ENCODE measurements at regions of chr10 and their contacts with region 1.

Region 1: GRCh38 chr10:61284222-61284890 is 168.8 kb downstream of the TMEM26 start:
- DNase-seq: peak; percentile 13 to 52
- H3K4me3 ChIP-seq: no peak overlapping the region
- H3K4me1 ChIP-seq: no peaks in the 10 kb centered on the region
- H3K27me3 ChIP-seq: no peaks in the 10 kb centered on the region

Region 2: DNA sequence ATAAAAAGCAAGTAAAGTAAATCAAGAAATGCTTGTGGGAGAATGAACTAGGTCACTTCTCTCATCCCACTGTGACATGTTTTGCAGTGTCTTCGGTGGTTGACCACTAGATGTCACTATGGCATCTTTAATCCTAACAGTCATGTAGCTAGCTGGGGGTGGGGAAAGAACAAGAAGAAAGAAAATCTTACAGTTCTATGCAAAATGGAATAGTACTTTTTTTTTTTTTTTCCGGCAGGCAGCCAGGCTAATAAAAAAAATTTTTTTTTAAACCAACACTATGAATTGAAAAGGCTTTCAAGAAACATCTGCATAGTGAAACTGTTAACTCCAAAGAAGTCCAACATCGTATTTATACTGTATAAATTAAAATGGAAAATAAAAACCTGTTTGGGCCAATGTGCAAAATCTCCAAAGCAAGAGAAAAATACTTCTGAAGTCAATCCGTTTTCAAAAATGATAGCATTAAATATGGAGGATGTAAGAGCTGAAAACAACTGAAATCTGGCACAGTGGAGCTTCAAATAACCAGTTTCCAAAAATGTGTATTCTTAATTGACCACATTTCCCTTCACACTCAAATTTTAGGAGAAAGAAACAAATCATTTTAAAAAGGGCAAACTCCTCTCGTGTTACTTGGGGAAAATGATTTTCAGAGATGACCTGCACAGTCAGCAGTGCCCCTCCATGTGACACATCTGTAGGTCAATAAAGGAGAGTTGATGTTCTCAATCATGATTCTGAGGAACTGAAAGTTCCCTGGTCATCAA is 467.5 kb before region 1 on chr10:
- in situ Hi-C with region 1: loop called (anchors 25 kb)
- DNase-seq: peak; percentile 64 to 89
- H3K4me3 ChIP-seq: no peak overlapping the region
- H3K4me1 ChIP-seq: peaks cover 3% of the 10 kb centered on the region; the same call in 1 of the 2 replicates
- H3K27me3 ChIP-seq: no peaks in the 10 kb centered on the region

Region 3: GRCh38 chr10:60870424-60870728 is 414.0 kb before region 1 on chr10:
- in situ Hi-C with region 1: no loop called
- DNase-seq: no peak
- H3K4me3 ChIP-seq: no peak overlapping the region
- H3K4me1 ChIP-seq: peaks cover 3% of the 10 kb centered on the region; the same call in 1 of the 2 replicates
- H3K27me3 ChIP-seq: no peaks in the 10 kb centered on the region

Region 4: GRCh38 chr10:61140765-61141392 is 143.5 kb before region 1 on chr10:
- in situ Hi-C with region 1: loop called (anchors 25 kb)
- DNase-seq: peak; percentile 22 to 63
- H3K4me3 ChIP-seq: no peak overlapping the region
- H3K4me1 ChIP-seq: peaks cover 8% of the 10 kb centered on the region
- H3K27me3 ChIP-seq: no peaks in the 10 kb centered on the region